Activated CD4-positive, alpha-beta T cell treated with anti-CD3 and anti-CD28 coated beads for 36 hours (primary cell): ENCODE measurements at regions of chr10 and their contacts with region 1.

Region 1: GRCh38 chr10:62492012-62492869 is 118.1 kb downstream of the ZNF365 start:
- DNase-seq: no peak
- ATAC-seq: no peak
- H3K4me3 Mint-ChIP-seq: no peak overlapping the region
- H3K27ac Mint-ChIP-seq: no peak overlapping the region
- H3K4me1 Mint-ChIP-seq: no peaks in the 10 kb centered on the region
- H3K27me3 Mint-ChIP-seq: peaks cover 3% of the 10 kb centered on the region

Region 2: GRCh38 chr10:62454696-62455389 is 37.4 kb before region 1 on chr10:
- CTCF ChIA-PET with region 1: no interaction called
- POLR2A ChIA-PET with region 1: no interaction called
- intact Hi-C with region 1: no loop called
- DNase-seq: no peak
- ATAC-seq: no peak
- H3K4me3 Mint-ChIP-seq: no peak overlapping the region
- H3K27ac Mint-ChIP-seq: no peak overlapping the region
- H3K4me1 Mint-ChIP-seq: peaks cover 3% of the 10 kb centered on the region
- H3K27me3 Mint-ChIP-seq: peaks cover 3% of the 10 kb centered on the region

Region 3: DNA sequence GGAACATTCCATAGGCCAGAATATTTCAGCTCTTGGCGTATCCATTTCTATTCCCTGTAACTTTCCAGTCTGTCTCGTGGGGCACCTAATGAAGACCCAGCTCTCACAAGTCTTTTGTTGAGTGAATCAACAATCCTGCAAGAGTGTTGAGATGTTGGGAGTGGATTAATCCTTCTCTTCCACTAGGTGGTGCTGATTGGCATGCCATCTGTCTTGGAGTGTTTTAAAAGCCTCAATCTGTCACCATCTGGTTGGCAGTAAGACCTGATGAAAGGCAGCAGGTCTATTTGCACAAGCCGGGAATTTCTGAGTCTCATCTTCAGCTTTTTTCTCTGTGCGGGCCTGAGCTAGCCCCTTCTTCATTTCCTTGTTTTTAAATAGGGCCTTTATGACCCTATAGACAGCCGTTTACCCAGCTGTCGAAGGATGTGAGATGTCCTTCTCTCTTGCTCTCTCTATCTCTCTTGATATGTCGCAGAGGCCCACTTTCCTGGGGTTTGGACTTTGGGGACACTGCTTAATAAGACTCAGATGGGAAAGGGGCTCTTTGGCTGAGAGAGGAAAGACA is 62.5 kb after region 1 on chr10:
- CTCF ChIA-PET with region 1: no interaction called
- POLR2A ChIA-PET with region 1: no interaction called
- intact Hi-C with region 1: loop called in 1 of 2 experiments (anchors 5 kb)
- DNase-seq: peak; percentile 16
- ATAC-seq: peak; percentile 57
- H3K4me3 Mint-ChIP-seq: no peak overlapping the region
- H3K27ac Mint-ChIP-seq: no peak overlapping the region
- H3K4me1 Mint-ChIP-seq: no peaks in the 10 kb centered on the region
- H3K27me3 Mint-ChIP-seq: peaks cover 20% of the 10 kb centered on the region

Region 4: DNA sequence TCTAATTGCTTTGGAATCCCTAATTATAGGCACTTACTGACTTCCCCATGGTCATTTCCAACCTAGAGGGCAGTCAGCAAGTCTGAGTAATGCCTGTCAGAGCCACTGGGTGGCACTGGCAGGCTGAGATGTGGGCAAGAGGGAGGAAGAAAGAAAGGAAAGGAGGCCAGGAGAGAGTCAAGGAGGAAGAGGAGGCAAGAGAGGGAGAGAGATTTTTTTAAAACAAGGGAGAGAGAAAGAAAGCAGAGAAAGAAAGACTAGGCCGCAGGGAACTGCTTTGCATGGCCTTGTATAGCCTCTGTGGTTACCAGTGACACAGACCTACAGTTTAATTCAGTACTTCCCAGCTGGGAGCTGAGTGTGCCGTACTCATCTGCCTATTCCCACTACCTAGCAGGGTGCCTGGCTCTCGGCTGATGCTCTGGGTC is 101.9 kb after region 1 on chr10:
- CTCF ChIA-PET with region 1: no interaction called
- POLR2A ChIA-PET with region 1: no interaction called
- intact Hi-C with region 1: loop called in 1 of 2 experiments (anchors 5 kb)
- DNase-seq: peak; percentile 71
- ATAC-seq: peak; percentile 84
- H3K4me3 Mint-ChIP-seq: no peak overlapping the region
- H3K27ac Mint-ChIP-seq: no peak overlapping the region
- H3K4me1 Mint-ChIP-seq: peaks cover 4% of the 10 kb centered on the region
- H3K27me3 Mint-ChIP-seq: peaks cover 14% of the 10 kb centered on the region